Activated CD8-positive, alpha-beta T cell treated with anti-CD3 and anti-CD28 coated beads for 36 hours (primary cell): ENCODE measurements at regions of chr17 and their contacts with region 1.

Region 1: GRCh38 chr17:10640475-10640874 is 16.6 kb downstream of the MYH3 start:
- DNase-seq: no peak
- ATAC-seq: no peak
- H3K4me3 Mint-ChIP-seq: no peak overlapping the region
- H3K27ac Mint-ChIP-seq: no peak overlapping the region
- H3K4me1 Mint-ChIP-seq: no peaks in the 10 kb centered on the region
- H3K27me3 Mint-ChIP-seq: no peaks in the 10 kb centered on the region
- CTCF ChIP-seq: no peak

Region 2: GRCh38 chr17:10652984-10653659 is 12.6 kb after region 1 on chr17:
- CTCF ChIA-PET with region 1: no interaction called
- POLR2A ChIA-PET with region 1: no interaction called
- intact Hi-C with region 1: no loop called
- DNase-seq: peak; percentile 62
- ATAC-seq: peak; percentile 86
- H3K4me3 Mint-ChIP-seq: no peak overlapping the region
- H3K27ac Mint-ChIP-seq: peak overlapping the region; percentile 71
- H3K4me1 Mint-ChIP-seq: peaks cover 16% of the 10 kb centered on the region
- H3K27me3 Mint-ChIP-seq: no peaks in the 10 kb centered on the region
- CTCF ChIP-seq: no peak

Region 3: GRCh38 chr17:10668771-10669170 is 28.3 kb after region 1 on chr17:
- CTCF ChIA-PET with region 1: interaction called, 11 read pairs
- POLR2A ChIA-PET with region 1: no interaction called
- intact Hi-C with region 1: loop called (anchors 2 kb)
- DNase-seq: no peak
- ATAC-seq: no peak
- H3K4me3 Mint-ChIP-seq: no peak overlapping the region
- H3K27ac Mint-ChIP-seq: no peak overlapping the region
- H3K4me1 Mint-ChIP-seq: no peaks in the 10 kb centered on the region
- H3K27me3 Mint-ChIP-seq: no peaks in the 10 kb centered on the region
- CTCF ChIP-seq: no peak